ENCODE measurements at regions of chr18 and their contacts with region 1.

Region 1: DNA sequence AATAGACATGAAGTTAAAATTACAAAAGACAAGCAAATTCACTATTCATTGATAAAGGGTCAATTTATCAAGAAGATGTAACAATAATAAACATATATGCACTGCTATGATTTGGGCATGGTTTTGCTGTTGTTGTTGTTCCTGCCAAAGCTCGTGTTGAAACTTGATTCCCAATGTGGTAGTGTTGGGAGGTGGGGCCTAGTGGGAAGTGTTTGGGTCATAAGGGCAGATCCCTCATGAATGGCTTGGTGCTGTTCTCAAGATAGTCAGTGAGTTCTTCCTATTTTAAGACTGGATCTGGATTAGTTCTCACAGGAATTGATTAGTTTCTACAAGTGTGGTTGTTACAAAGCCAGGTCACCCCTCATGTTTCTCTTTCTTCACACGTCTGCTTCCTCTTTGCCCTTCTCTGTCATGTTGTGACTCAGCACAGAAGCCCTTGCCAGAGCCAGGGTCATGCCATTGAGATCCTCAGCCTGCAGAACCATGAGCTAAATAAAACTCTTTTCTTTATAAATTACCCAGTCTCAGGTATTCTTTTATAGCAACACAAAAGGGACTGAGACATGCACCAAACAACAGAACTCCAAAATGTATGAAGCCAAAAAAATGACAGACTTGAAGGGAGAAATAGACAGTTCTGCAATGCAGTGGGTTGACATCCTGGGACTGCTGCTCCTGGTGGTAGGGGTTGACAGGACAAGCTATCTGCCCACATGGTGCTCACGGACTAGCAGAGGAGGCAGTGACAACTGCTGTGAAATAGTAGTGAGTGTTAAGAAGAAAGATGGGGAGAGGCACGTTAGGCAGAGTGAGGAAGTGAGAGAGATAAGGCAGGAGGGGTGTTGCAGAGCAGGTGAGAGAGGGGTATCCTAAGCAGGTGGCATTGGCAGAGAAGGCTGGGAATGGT is 18.6 kb upstream of the SKA1 start:
- DNase-seq: peak; percentile 36
- CTCF ChIP-seq: peak; percentile 29

Region 2: DNA sequence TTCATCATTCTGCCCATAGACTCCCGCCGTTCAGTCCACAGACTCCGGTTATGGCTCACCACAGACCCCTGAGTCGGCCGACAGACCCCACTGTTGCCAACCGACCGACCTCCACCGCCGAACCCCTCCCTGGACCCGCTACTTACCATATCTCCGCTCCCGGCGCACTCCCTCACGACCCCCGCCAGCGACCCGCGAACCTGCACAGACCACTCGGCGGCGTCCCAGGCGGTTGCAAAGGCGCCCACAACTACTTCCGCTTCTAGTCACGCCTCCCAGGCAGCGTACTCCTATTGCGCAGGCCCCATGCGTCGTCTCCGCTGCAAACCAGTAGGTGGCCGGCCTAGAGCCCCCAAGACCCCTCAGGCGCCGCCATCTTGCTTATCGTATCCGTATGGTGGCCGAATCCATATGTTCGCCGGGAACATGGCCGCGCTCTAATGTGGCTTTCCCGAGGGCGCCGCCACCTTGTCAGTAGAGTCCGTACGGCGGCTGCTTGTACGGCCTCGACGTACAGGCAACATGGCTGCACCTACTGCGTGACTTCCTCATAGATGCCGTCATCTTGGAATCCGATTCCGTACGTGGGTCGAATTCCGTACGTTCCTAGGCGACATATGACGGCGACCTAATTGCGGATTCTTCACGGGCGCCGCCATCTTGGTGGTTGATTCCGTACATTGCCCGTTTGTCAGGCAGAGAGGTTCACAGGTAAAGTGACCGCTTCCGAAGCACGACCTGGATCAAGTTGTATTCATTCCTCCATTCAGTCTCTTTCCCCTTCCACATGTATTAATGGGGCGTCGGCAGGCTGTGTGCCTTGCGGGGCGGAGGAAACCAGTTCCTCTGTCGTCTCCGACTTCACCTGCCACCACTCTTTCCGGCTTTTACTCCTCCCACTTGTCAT is 68.6 kb before region 1 on chr18 and contains the start of gene CXXC1:
- in situ Hi-C with region 1: loop called (anchors 10 kb)
- DNase-seq: peak; percentile 92
- CTCF ChIP-seq: peak; percentile 45